AG04450 (cell line): ENCODE measurements at regions of chr4 and their contacts with region 1.

Region 1: GRCh38 chr4:147096667-147097604 is 151.3 kb upstream of the TTC29 start:
- DNase-seq: peak; percentile 15
- H3K4me3 ChIP-seq: no peak overlapping the region
- H3K27ac ChIP-seq: no peak overlapping the region
- H3K27me3 ChIP-seq: peaks cover 2% of the 10 kb centered on the region
- CTCF ChIP-seq: peak; percentile 60

Region 2: DNA sequence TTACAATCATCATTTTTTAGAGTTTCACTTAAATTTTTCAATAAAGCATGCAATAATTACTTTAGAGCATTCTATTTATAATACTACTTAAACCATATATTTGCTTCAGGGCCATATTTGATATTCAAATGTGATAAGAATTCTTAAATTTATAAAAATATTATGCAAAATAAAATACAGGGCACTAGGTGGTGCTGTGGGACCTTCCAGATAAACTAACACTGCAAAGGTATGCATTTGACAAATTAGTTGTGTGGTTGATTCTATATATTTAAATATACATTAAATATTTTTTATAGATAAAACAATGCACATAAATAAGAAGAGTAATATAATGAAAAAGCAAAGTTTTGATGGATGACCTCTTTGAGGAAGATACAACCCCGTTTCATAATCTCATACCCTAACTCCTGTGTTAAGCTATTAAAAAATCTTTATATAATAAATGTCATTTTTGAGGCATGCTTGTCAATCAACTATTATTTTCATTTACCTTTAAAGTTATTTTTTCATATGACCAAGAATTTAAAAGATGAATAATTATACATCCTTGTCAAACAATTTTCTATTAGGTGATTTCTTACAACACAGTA is 754.2 kb before region 1 on chr4:
- CTCF ChIA-PET with region 1: interaction called, 17 read pairs
- POLR2A ChIA-PET with region 1: no interaction called
- DNase-seq: no peak
- H3K4me3 ChIP-seq: no peak overlapping the region
- H3K27ac ChIP-seq: no peak overlapping the region
- H3K27me3 ChIP-seq: no peaks in the 10 kb centered on the region
- CTCF ChIP-seq: peak; percentile 68

Region 3: GRCh38 chr4:146776691-146777090 is 320.2 kb before region 1 on chr4:
- CTCF ChIA-PET with region 1: no interaction called
- POLR2A ChIA-PET with region 1: no interaction called
- DNase-seq: no peak
- H3K4me3 ChIP-seq: no peak overlapping the region
- H3K27ac ChIP-seq: no peak overlapping the region
- H3K27me3 ChIP-seq: no peaks in the 10 kb centered on the region
- CTCF ChIP-seq: no peak

Region 4: GRCh38 chr4:147019061-147019460 is 77.9 kb before region 1 on chr4:
- CTCF ChIA-PET with region 1: interaction called, 148 read pairs
- POLR2A ChIA-PET with region 1: no interaction called
- DNase-seq: peak; percentile 13
- H3K4me3 ChIP-seq: no peak overlapping the region
- H3K27ac ChIP-seq: no peak overlapping the region
- H3K27me3 ChIP-seq: no peaks in the 10 kb centered on the region
- CTCF ChIP-seq: peak; percentile 69

Region 5: DNA sequence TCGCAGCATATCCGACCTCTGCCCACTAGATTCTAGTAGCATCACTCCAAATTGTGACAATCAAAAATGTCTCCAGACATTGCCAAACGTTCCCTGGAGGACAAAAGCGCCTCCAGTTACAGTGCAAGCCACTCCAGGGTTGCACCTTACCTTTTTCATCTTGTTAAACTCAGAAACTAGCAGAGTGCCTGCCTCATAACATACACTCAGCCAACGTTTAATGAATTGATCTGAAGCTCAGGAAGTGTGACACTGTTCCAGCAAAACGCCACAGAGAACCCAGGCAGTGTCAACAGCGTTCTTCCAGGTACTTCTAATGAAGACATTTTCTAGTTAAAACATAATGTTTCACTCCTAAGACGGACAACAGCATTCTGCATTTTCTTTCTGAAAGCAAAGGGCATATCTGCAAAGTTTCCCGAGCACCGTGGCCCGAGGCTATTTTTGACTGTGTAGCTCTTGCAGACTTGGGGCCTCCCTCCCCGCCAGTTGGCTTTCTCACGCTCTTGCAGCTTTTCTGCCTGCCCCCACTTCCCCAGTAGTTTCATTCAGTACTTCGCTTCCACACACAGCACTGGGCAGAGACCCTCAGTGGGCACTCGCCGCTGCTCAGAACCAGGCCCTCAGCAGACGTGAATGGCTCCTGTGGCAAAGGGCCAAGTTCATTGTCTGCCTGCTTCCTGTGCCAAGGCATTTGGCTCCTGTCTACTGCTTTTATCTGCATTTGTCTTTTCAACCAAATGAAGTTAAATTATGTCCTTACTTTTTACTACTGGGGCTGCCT is 17.9 kb before region 1 on chr4:
- CTCF ChIA-PET with region 1: interaction called, 15 read pairs
- POLR2A ChIA-PET with region 1: no interaction called
- DNase-seq: no peak
- H3K4me3 ChIP-seq: no peak overlapping the region
- H3K27ac ChIP-seq: no peak overlapping the region
- H3K27me3 ChIP-seq: peaks cover 2% of the 10 kb centered on the region
- CTCF ChIP-seq: no peak

Region 6: DNA sequence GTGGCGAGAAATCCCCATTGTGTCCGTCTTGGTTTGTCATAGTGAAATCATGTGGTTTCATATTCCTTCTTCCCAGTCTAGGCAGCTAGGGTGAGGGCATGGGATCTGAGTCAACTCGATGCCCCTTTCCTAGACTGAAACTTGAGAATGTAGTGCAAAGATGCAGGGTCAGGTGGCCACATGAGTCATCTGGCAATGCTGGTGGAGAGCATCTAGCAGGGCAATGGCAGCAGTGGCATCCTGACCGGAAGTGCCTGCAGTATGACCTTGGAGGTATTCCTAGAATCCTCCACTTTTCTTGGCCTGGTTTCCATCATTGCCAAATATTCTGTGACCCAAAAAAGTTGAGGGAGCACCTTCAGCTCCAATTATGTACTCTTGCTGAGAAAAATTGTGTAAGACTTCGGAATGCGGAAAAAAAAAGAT is 481.1 kb after region 1 on chr4:
- CTCF ChIA-PET with region 1: interaction called, 10 read pairs
- POLR2A ChIA-PET with region 1: no interaction called
- DNase-seq: peak; percentile 86
- H3K4me3 ChIP-seq: no peak overlapping the region
- H3K27ac ChIP-seq: no peak overlapping the region
- H3K27me3 ChIP-seq: no peaks in the 10 kb centered on the region
- CTCF ChIP-seq: no peak